ENCODE measurements at regions of chr7 and their contacts with region 1.

Region 1: GRCh38 chr7:151110941-151111645 is 24.8 kb downstream of the AGAP3 start:
- DNase-seq: no peak
- H3K4me3 ChIP-seq: no peak overlapping the region
- H3K27ac ChIP-seq: no peak overlapping the region
- H3K27me3 ChIP-seq: no peaks in the 10 kb centered on the region
- CTCF ChIP-seq: peak; percentile 88

Region 2: GRCh38 chr7:150962553-150963399 is 148.3 kb before region 1 on chr7:
- CTCF ChIA-PET with region 1: interaction called, 20 read pairs
- POLR2A ChIA-PET with region 1: no interaction called
- DNase-seq: no peak
- H3K4me3 ChIP-seq: no peak overlapping the region
- H3K27ac ChIP-seq: no peak overlapping the region
- H3K27me3 ChIP-seq: peaks cover 27% of the 10 kb centered on the region
- CTCF ChIP-seq: peak; percentile 91

Region 3: DNA sequence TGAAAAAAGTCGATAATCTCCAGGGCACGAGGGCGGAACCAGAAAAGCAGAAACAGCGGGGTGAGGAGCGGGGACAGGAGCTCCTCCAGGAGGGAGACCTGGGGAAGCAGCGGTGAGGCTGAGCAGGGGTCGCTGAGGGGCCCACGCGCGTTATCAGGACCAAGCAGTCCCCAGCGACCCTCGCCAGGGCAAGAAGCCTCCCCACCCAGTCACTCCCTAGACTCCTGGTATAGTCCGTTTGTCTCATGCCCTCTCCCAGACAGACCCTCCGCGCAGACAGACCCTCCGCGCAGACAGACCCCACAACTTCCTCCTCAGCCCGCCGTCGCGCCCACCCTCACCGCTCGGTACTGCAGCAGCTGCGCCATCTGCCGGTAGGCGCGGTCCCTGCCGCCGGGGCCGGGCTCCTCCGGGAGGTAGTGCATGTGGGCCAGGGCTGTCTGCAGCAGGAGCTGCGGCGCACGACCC is 93.1 kb before region 1 on chr7:
- CTCF ChIA-PET with region 1: interaction called, 14 read pairs
- POLR2A ChIA-PET with region 1: no interaction called
- DNase-seq: no peak
- H3K4me3 ChIP-seq: peak overlapping the region; percentile 40
- H3K27ac ChIP-seq: no peak overlapping the region
- H3K27me3 ChIP-seq: peaks cover 49% of the 10 kb centered on the region
- CTCF ChIP-seq: peak; percentile 90

Region 4: GRCh38 chr7:151062399-151063211 is 48.5 kb before region 1 on chr7:
- CTCF ChIA-PET with region 1: interaction called, 11 read pairs
- POLR2A ChIA-PET with region 1: no interaction called
- DNase-seq: no peak
- H3K4me3 ChIP-seq: peak overlapping the region; percentile 27
- H3K27ac ChIP-seq: peak overlapping the region; percentile 77
- H3K27me3 ChIP-seq: no peaks in the 10 kb centered on the region
- CTCF ChIP-seq: no peak

Region 5: GRCh38 chr7:151091431-151091830 is 19.7 kb before region 1 on chr7:
- CTCF ChIA-PET with region 1: interaction called, 86 read pairs
- POLR2A ChIA-PET with region 1: interaction called, 4 read pairs
- DNase-seq: no peak
- H3K4me3 ChIP-seq: no peak overlapping the region
- H3K27ac ChIP-seq: no peak overlapping the region
- H3K27me3 ChIP-seq: no peaks in the 10 kb centered on the region
- CTCF ChIP-seq: peak; percentile 56

Measured in AG04450 (cell line).